ENCODE measurements at regions of chr17 and their contacts with region 1.

Region 1: DNA sequence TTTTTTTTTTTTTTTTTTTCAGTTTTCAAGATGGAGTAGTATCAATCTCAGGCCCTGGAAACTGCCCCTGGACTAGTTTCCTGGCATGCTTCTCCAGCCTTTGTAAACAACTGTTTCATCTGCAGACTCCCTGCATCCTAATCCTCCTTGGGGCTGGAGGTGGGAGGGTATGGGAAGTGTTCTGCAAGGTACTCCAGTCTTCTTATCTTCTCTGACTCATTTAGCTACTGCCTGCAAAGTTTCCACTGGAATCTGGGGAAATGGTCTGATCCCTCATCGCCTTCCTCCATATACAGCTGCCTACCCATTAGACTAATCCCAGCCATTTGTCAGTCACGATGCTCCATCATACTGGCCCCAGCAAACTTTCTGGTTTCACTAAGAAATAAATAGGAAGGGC is 21.5 kb downstream of the COPZ2 start:
- DNase-seq: no peak
- ATAC-seq: no peak
- H3K4me3 ChIP-seq: no peak overlapping the region
- H3K27ac ChIP-seq: no peak overlapping the region
- H3K4me1 ChIP-seq: no peaks in the 10 kb centered on the region
- H3K27me3 ChIP-seq: no peaks in the 10 kb centered on the region

Region 2: GRCh38 chr17:47850692-47851573 is 165.2 kb before region 1 on chr17 and contains the start of gene SP6:
- intact Hi-C with region 1: loop called in 1 of 2 experiments (anchors 5 kb)
- DNase-seq: peak; percentile 69 to 88
- ATAC-seq: peak; percentile 67
- H3K4me3 ChIP-seq: no peak within 1 kb of the TSS
- H3K27ac ChIP-seq: no peak within 1 kb of the TSS
- H3K4me1 ChIP-seq: no peaks in the 10 kb centered on the region
- H3K27me3 ChIP-seq: peaks cover 0 to 2% of the 10 kb centered on the region in 2 donors
- total RNA-seq, gene SP6: 0.78 to 0.81 TPM

Region 3: GRCh38 chr17:47905221-47905781 is 110.8 kb before region 1 on chr17:
- intact Hi-C with region 1: no loop called
- DNase-seq: peak; percentile 89 to 91
- ATAC-seq: peak; percentile 87
- H3K4me3 ChIP-seq: no peak overlapping the region
- H3K27ac ChIP-seq: peak overlapping the region; percentile 84 to 91
- H3K4me1 ChIP-seq: peaks cover 0 to 23% of the 10 kb centered on the region in 2 donors
- H3K27me3 ChIP-seq: no peaks in the 10 kb centered on the region

Region 4: DNA sequence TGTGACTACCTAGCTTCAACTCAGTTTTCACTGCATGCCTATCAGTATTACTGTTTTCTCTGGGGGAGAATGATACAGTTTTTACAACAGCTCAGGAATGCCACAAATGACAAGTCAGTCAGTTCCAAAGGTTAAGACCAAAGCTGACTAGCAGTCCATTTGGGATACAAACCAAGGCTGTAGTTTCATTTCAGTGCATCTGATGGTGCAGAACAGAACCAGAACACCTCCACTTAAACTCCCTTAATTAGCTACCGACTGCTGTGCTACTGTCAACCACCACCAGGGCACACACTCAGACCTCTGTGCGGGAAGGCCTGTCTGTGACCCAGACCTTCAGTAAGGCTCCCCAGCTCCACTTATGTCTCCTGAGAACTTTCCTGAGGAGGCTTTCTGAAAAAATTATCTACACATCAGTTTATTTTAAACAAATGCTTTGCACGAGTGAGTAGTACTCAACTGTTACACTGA is 52.4 kb after region 1 on chr17:
- intact Hi-C with region 1: no loop called
- DNase-seq: no peak
- ATAC-seq: no peak
- H3K4me3 ChIP-seq: no peak overlapping the region
- H3K27ac ChIP-seq: no peak overlapping the region
- H3K4me1 ChIP-seq: no peaks in the 10 kb centered on the region
- H3K27me3 ChIP-seq: no peaks in the 10 kb centered on the region

Measured in aorta (tissue), 5 donors.